ENCODE measurements at regions of chr17 and their contacts with region 1.

Region 1: DNA sequence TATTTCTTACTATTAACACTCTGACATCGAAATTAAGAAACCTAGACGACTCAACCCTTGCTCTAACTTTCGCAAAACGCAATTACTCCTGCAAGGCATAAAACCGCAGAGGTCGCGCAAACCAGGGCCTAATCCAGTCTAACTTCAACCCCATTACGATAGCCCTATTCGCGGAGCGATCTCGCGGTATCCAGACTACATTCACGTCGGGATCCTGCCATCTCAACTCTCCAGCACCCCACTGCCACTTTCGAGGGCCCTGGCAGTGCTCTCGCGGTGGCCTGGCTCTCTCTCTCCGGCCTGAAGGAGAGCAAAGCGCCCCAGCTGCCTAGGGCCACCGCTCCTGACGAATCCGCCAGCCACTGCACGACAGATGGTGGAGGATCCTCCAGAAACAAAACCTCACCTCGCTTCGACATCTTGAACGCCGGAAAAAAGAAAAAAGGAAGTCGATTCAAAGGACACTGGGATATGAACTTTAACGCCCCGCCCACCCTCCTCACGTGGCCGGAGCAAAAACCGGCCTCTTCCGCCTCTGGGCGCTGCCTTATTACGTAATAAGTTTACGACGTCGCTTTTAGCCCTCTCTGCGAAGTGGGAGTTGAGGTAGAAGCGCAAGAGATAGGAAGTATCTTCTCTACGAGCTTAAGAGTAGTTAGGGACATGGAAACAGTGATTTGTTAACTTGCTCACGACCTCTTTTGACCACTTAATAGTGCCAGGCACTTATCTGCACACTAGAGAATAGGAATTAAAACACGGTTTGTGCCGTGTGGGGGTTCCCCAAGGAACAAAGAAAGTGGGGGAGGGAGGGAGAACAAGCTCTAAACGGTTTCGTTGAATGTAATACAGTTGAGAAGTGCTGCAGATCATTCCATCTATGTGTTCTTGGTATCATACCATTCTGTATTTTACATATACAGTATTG is at the start of gene RPL23:
- DNase-seq: peak; percentile 90
- H3K4me3 Mint-ChIP-seq: peak within 1 kb of the TSS; percentile 99
- H3K27ac Mint-ChIP-seq: peak within 1 kb of the TSS; percentile 97
- H3K4me1 Mint-ChIP-seq: peaks cover 44% of the 10 kb centered on the region
- H3K27me3 Mint-ChIP-seq: no peaks in the 10 kb centered on the region
- total RNA-seq, gene RPL23: 1,847 and 1,871 TPM in 2 replicates

Region 2: GRCh38 chr17:38702166-38702899 is 151.2 kb before region 1 on chr17:
- intact Hi-C with region 1: loop called (anchors 5 kb)
- DNase-seq: peak; percentile 75
- H3K4me3 Mint-ChIP-seq: peak overlapping the region; percentile 97
- H3K27ac Mint-ChIP-seq: peak overlapping the region; percentile 99
- H3K4me1 Mint-ChIP-seq: peaks cover 65% of the 10 kb centered on the region
- H3K27me3 Mint-ChIP-seq: no peaks in the 10 kb centered on the region

Region 3: DNA sequence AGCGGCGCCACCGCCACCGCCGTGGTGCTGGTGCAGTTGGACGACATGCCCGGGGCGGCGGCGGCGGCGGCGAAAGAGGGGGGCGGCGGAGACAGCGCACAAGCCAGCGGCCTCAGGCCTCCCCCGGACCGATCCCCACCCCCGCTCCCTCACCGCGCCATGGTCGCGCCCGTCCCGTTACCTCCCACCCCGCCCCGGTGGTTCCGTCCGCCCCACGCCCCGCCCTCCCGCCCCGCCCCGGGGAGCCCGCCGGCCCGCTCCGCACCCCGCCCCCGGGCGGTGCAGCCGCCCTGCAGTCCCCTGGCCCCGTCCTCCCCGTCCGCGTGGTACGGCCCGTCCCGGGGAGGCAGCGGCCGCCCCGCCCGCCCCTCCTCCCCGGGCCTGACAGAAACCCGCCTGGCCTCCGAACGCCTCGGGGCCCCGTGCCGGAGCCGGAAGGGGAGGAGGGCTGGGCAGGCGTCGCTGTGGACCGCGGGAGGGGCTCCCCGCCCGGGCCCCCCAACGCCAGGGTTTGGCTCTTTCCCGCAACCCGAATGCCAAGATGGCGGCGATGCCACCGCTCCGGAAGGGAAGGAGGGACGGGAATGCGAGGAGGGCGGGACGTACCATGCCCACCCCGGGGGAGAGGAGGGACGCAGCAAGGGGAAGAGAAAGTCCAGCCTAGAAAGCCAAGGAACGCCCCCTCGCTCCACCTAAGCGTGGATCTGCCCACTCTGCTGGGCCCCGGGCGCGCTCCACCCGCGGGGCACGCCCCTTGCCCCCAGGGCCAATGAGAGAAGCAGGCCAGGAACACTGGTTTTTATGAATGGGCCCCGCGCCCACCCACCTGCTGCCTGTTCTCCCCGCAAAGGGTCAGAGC is 53.9 kb before region 1 on chr17 and contains the start of gene PIP4K2B:
- intact Hi-C with region 1: loop called (anchors 1 kb)
- DNase-seq: peak; percentile 85
- H3K4me3 Mint-ChIP-seq: peak within 1 kb of the TSS; percentile 93
- H3K27ac Mint-ChIP-seq: peak within 1 kb of the TSS; percentile 93
- H3K4me1 Mint-ChIP-seq: peaks cover 33% of the 10 kb centered on the region
- H3K27me3 Mint-ChIP-seq: no peaks in the 10 kb centered on the region
- total RNA-seq, gene PIP4K2B: 40.6 and 40.8 TPM in 2 replicates

Region 4: DNA sequence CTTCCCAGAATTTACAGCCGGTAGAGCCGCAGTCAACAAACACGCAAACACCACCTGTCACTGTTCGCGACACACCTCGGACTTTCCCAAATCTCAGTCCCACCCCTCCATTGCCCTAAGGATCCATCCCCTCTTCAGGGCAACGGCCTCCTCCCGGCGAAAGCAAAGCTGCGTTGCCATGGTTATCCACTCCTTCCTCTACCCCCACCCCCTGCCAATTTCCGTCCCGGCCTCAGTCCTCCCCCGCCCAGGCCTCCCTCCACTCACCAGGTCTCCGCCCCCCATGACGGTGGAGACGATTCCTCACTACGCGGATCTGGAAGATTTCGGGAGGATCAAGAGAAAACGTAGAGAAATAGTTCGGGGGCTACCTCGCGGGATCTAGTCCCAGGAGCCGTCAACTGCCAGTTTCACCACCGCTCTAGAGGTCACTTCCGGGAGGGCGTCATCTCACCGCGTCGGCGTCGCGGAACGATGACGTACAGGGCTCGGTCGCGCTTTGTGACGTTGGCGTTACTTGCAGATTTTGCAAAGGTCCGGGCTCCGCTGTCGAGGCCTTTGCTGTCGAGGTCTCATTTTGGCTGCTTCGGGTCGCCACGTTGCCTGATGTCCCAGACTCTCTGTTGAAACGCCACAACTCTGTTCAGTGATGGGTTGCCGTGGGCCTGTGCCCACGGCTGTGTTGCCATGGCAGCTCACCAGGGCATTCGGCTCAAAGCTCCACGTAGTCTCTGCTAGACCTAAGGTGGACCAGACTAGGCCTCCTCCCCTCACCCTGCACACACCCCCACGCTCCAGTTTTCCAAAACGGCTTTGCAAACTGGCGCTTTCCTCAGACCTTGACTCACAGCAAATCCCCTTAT is 28.4 kb before region 1 on chr17 and contains the start of gene CWC25:
- intact Hi-C with region 1: loop called (anchors 1 kb)
- DNase-seq: peak; percentile 97
- H3K4me3 Mint-ChIP-seq: peak within 1 kb of the TSS; percentile 99
- H3K27ac Mint-ChIP-seq: peak within 1 kb of the TSS; percentile 99
- H3K4me1 Mint-ChIP-seq: peaks cover 33% of the 10 kb centered on the region
- H3K27me3 Mint-ChIP-seq: peaks cover 2% of the 10 kb centered on the region
- total RNA-seq, gene CWC25: 28.6 and 30.4 TPM in 2 replicates

Region 5: GRCh38 chr17:38898812-38899348 is 45.3 kb after region 1 on chr17:
- intact Hi-C with region 1: loop called (anchors 1 kb)
- DNase-seq: peak; percentile 75
- H3K4me3 Mint-ChIP-seq: peak overlapping the region; percentile 74
- H3K27ac Mint-ChIP-seq: peak overlapping the region; percentile 94
- H3K4me1 Mint-ChIP-seq: peaks cover 58% of the 10 kb centered on the region
- H3K27me3 Mint-ChIP-seq: no peaks in the 10 kb centered on the region

Region 6: DNA sequence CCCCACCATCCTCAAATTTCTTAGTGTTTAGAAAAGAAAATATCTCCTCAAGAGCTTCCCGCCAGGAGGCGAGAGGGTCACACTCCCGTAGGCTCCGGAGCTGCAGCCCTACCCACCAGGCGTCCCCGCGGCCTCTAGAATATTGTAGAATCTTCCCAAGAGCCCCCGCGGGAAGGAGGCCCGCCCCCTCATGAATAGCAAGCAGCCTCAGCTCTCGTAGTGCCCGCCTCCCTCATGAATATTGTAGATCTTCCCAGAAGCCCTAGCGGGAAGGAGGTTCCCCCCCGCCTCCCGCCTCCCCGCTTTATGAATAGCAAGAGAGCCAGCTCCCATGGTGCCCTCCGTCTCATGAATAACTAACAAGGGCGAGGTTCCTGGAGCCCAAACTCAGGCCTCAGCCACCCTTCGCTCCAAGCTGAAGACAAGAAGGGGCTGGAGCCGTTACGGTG is 113.8 kb after region 1 on chr17 and contains the start of gene FBXO47:
- intact Hi-C with region 1: loop called (anchors 5 kb)
- DNase-seq: peak; percentile 72
- H3K4me3 Mint-ChIP-seq: peak within 1 kb of the TSS; percentile 78
- H3K27ac Mint-ChIP-seq: peak within 1 kb of the TSS; percentile 65
- H3K4me1 Mint-ChIP-seq: peaks cover 11% of the 10 kb centered on the region
- H3K27me3 Mint-ChIP-seq: peaks cover 11% of the 10 kb centered on the region
- total RNA-seq, gene FBXO47: 0.08 TPM in 1 of 2 replicates, not detected in the other

Region 7: GRCh38 chr17:39199820-39200069 is 346.2 kb after region 1 on chr17:
- intact Hi-C with region 1: loop called (anchors 5 kb)
- DNase-seq: peak; percentile 84
- H3K4me3 Mint-ChIP-seq: peak overlapping the region; percentile 93
- H3K27ac Mint-ChIP-seq: peak overlapping the region; percentile 98
- H3K4me1 Mint-ChIP-seq: peaks cover 47% of the 10 kb centered on the region
- H3K27me3 Mint-ChIP-seq: no peaks in the 10 kb centered on the region

Measured in activated T-helper 1 cell treated with anti-CD3 and anti-CD28 coated beads, Interleukin-12 subunit alpha, Interleukin-12 subunit beta, Interleukin-2, Interleukin-4 antibody, amounts not matched to agents 30 ng/mL and 10 ng/mL and 1 ng/mL, durations not matched to agents 14 hours and 24 hours and 36 hours (primary cell).